HEK293 (cell line): ENCODE measurements at regions of chr18 and their contacts with region 1.

Region 1: DNA sequence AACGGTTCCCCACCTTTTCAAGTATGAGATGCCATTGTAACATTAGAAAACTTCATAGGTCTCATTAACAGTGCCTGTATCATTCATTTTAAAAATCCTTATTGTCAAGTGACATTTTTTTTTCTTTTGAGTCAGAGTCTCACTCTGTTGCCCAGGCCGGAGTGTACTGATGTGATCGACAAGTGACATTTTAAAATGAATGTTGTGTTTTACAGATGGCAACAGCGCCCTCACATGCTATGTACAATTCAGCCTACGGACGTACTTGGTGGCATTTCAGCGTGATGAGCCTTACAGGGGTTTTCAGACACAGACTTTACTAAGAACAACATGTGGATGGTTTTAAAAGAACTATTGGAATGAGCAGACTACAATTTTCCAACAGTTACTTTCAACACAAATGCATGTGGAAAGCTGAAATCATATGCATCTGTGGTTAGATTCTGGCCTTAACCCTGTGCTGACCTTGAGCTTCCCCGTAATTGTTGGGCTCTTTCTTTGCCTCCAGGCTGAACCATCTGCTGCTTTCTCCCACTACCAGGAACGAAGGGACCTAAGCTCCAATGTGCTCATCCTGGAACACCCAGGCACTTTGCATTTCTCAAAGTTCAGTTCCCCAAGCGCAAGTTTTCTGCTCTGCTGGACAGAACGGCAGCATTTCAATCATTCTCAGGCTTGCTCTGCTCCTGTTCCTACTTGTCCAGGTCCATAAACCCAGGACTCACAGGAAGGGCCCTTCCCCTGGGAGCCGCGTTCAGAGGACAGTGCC is 119.9 kb upstream of the NDUFV2 start:
- H3K4me3 ChIP-seq: no peak overlapping the region
- H3K27ac ChIP-seq: no peak overlapping the region
- H3K4me1 ChIP-seq: no peaks in the 10 kb centered on the region
- CTCF ChIP-seq: no peak; the same call in 1 of the 2 replicates

Region 2: GRCh38 chr18:8969639-8970390 is 12.8 kb before region 1 on chr18:
- CTCF ChIA-PET with region 1: interaction called, 11 read pairs
- POLR2A ChIA-PET with region 1: no interaction called
- H3K4me3 ChIP-seq: no peak overlapping the region
- H3K27ac ChIP-seq: no peak overlapping the region
- H3K4me1 ChIP-seq: no peaks in the 10 kb centered on the region
- CTCF ChIP-seq: no peak